CD4-positive, alpha-beta T cell (primary cell): ENCODE measurements at regions of chr19 and their contacts with region 1.

Region 1: GRCh38 chr19:34404109-34404897 is at the start of gene PDCD2L:
- DNase-seq: peak; percentile 87 to 97 (median 92)
- ATAC-seq: peak; percentile 95
- H3K4me3 ChIP-seq: peak within 1 kb of the TSS; percentile 98
- H3K4me3 Mint-ChIP-seq: peak within 1 kb of the TSS; percentile 95
- H3K27ac ChIP-seq: peak within 1 kb of the TSS; percentile 34 to 72
- H3K27ac Mint-ChIP-seq: peak within 1 kb of the TSS; percentile 86
- H3K4me1 ChIP-seq: peaks cover 10% of the 10 kb centered on the region
- H3K4me1 Mint-ChIP-seq: peaks cover 25% of the 10 kb centered on the region
- H3K27me3 ChIP-seq: no peaks in the 10 kb centered on the region
- H3K27me3 Mint-ChIP-seq: no peaks in the 10 kb centered on the region
- CTCF ChIP-seq: no peak
- total RNA-seq, gene PDCD2L: 3.8 to 3.9 TPM

Region 2: DNA sequence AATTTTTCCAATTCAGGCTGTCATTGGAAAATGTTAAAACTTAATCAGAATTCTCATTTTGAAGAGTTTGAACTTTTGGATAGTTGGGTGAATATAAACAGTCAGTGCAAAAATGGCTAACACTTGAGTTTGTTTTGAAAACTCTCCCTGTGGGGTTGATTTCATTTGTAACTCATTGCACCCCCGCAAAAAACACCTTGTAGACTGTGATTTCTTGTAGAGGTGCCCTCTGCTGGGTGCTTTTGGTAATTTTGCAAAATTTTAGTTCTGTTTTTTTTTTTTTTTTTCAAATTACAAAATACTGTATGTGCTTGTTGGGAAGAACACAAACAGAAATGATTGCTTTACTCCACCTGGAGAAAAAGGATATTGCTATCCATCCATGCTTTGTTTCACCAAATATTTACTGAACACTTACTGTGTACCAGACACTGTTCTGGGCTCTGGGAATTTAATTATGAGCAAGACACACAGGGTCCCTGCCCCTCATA is 67.5 kb before region 1 on chr19:
- CTCF ChIA-PET with region 1: no interaction called
- POLR2A ChIA-PET with region 1: no interaction called
- intact Hi-C with region 1: no loop called
- DNase-seq: peak in 12 of 14 experiments; percentile 16 to 79 (median 42)
- ATAC-seq: peak; percentile 76
- H3K4me3 ChIP-seq: no peak overlapping the region
- H3K4me3 Mint-ChIP-seq: no peak overlapping the region
- H3K27ac ChIP-seq: no peak overlapping the region
- H3K27ac Mint-ChIP-seq: peak overlapping the region; percentile 74
- H3K4me1 ChIP-seq: peaks cover 5% of the 10 kb centered on the region
- H3K4me1 Mint-ChIP-seq: peaks cover 13% of the 10 kb centered on the region
- H3K27me3 ChIP-seq: no peaks in the 10 kb centered on the region
- H3K27me3 Mint-ChIP-seq: no peaks in the 10 kb centered on the region
- CTCF ChIP-seq: peak; percentile 78

Region 3: DNA sequence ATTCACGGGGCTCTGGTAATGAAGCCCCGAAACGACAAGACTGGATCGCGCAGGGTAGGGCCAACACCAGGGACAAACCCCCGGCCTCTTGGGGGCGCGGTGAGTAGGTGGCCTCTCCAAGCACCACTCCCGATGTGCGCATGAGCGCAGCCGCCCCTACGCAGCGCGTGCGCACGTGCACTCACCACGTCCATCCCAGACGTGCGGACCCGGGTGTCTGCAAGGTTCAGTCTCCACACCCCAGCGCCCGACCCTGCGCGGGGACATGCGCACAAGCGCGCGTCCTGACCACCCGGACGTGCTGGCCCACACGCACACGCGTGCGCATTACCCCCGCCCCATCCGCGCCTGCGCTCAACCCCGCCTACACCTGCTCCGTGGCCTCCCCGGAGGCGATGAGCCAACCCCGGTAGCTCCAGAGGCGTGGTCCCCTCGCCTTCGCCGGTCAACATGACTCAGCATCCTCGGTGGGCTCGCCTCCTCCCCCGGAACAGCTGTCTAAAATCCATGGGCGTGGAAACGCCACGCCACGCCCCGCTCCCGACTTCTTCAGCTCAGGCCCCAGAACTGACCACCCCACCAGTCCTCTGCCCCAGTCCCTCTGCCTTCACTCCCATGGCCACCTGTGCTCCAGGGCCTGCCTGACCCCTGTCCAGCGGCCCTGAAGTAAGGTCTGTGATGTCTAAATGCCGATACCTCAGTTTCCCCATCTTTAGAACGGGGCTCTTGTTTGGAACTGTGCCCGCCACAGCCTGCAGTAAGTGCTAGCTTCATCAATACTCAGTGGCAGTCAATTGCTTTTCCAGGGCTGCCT is 45.0 kb before region 1 on chr19:
- CTCF ChIA-PET with region 1: no interaction called
- POLR2A ChIA-PET with region 1: interaction called, 4 read pairs
- intact Hi-C with region 1: loop called (anchors 1 to 2 kb)
- DNase-seq: peak; percentile 80 to 98 (median 93)
- ATAC-seq: peak; percentile 87
- H3K4me3 ChIP-seq: peak overlapping the region; percentile 66
- H3K4me3 Mint-ChIP-seq: peak overlapping the region; percentile 89
- H3K27ac ChIP-seq: peak overlapping the region; percentile 57 to 58
- H3K27ac Mint-ChIP-seq: peak overlapping the region; percentile 90
- H3K4me1 ChIP-seq: peaks cover 24% of the 10 kb centered on the region
- H3K4me1 Mint-ChIP-seq: peaks cover 31% of the 10 kb centered on the region
- H3K27me3 ChIP-seq: no peaks in the 10 kb centered on the region
- H3K27me3 Mint-ChIP-seq: no peaks in the 10 kb centered on the region
- CTCF ChIP-seq: peak; percentile 74